Mammary epithelial cell (primary cell): ENCODE measurements at regions of chr12 and their contacts with region 1.

Region 1: DNA sequence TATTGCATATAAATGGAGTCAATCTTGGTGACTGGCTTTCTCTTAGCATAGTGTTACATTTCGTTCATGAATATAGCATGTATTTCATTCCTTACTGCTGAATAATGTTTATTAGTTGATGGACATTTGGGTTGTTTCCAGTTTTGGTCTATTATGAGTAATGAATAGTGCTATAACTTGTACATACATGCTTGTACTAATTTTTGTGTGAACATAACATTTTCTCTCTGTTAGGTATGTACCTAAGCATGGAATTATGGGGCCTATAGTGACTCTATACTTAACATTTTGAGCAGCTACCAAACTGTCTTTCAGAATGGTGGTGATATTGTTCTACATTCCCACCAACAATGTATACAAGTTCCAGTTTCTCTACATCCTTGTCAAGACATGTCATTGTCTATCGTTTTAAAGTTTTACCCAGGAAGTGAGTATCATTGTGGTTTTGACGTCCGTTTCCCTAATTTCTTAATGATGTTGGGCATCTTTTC is 23.1 kb downstream of the ATP2A2 start:
- DNase-seq: peak; percentile 93
- H3K4me3 ChIP-seq: no peak overlapping the region
- H3K27ac ChIP-seq: peak overlapping the region; percentile 85
- H3K4me1 ChIP-seq: peaks cover 49% of the 10 kb centered on the region
- H3K27me3 ChIP-seq: no peaks in the 10 kb centered on the region
- CTCF ChIP-seq: no peak

Region 2: DNA sequence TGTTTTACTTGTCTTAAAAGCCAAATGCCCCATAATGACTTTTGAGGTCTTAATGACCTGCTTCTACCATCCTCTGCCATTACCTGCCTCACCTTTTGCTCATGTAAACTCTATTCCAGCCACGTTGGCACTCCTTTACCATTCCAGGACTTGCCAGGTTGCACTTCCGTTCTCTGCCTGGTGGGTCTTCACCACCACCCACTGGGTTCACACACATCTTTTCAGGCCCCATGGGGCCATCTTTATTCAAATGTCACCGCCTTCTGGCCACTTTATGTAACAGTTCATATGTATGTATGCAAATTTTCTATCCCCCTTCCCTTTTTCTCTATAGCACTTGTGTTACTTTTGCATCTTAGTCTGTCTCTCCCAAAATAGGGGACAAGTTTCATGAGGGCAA is 34.6 kb after region 1 on chr12:
- CTCF ChIA-PET with region 1: no interaction called
- dilution Hi-C with region 1: no loop called
- in situ Hi-C with region 1: no loop called
- intact Hi-C with region 1: loop called (anchors 5 kb)
- DNase-seq: no peak
- H3K4me3 ChIP-seq: no peak overlapping the region
- H3K27ac ChIP-seq: no peak overlapping the region
- H3K4me1 ChIP-seq: peaks cover 24% of the 10 kb centered on the region
- H3K27me3 ChIP-seq: no peaks in the 10 kb centered on the region
- CTCF ChIP-seq: peak in 1 of 2 donors; percentile 8